Ascending aorta (tissue), 2 donors: ENCODE measurements at regions of chr17 and their contacts with region 1.

Region 1: GRCh38 chr17:28018439-28019070 is 23.9 kb upstream of the NLK start:
- DNase-seq: no peak
- H3K4me3 ChIP-seq: no peak overlapping the region
- H3K27ac ChIP-seq: no peak overlapping the region
- H3K4me1 ChIP-seq: no peaks in the 10 kb centered on the region
- H3K27me3 ChIP-seq: no peaks in the 10 kb centered on the region
- CTCF ChIP-seq: no peak

Region 2: DNA sequence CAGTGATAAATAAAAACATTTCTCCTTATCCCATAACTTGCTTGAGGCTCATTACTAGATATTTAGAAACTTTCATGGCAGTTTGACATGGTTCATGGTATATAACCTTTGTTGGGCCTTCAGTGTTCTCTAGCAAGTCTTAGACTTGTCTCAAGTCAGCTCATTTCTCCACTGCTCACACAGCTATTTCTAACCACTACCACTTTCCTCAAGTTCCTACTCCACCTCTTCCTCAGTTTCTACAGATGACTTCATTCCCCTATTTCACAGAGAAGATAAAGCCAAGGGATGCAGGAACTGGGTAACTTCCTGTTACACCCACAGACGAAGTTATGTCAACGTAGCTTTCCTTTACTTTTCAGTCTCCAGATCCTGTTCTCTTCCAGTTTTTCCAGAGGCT is 47.2 kb after region 1 on chr17:
- intact Hi-C with region 1: loop called (anchors 10 kb)
- DNase-seq: no peak
- H3K4me3 ChIP-seq: no peak overlapping the region
- H3K27ac ChIP-seq: no peak overlapping the region
- H3K4me1 ChIP-seq: no peaks in the 10 kb centered on the region
- H3K27me3 ChIP-seq: no peaks in the 10 kb centered on the region
- CTCF ChIP-seq: no peak

Region 3: GRCh38 chr17:28145348-28145747 is 126.8 kb after region 1 on chr17:
- intact Hi-C with region 1: no loop called
- DNase-seq: no peak
- H3K4me3 ChIP-seq: no peak overlapping the region
- H3K27ac ChIP-seq: no peak overlapping the region
- H3K4me1 ChIP-seq: no peaks in the 10 kb centered on the region
- H3K27me3 ChIP-seq: no peaks in the 10 kb centered on the region
- CTCF ChIP-seq: no peak